ENCODE measurements at regions of chr12 and their contacts with region 1.

Region 1: GRCh38 chr12:11746024-11746771 is 96.7 kb downstream of the ETV6 start:
- DNase-seq: peak in 1 of 2 experiments; percentile 77
- ATAC-seq: peak; percentile 81 to 93
- H3K4me3 ChIP-seq: no peak overlapping the region
- H3K27ac ChIP-seq: peak overlapping the region; percentile 28 to 65; a peak in 4 of 6 replicates
- H3K4me1 ChIP-seq: peaks cover 30% of the 10 kb centered on the region; the same call in 2 of the 3 replicates
- CTCF ChIP-seq: no peak
- EP300 ChIP-seq: peak; percentile 14 to 68; a peak in 1 of 5 replicates
- POLR2A ChIP-seq: no peak
- RAD21 ChIP-seq: peak in 1 of 2 experiments; percentile 18; a peak in 1 of 5 replicates

Region 2: GRCh38 chr12:11648831-11649702 is 97.1 kb before region 1 on chr12 and contains the start of gene ETV6:
- CTCF ChIA-PET with region 1: no interaction called
- POLR2A ChIA-PET with region 1: interaction called, 14 read pairs
- DNase-seq: peak; percentile 82 to 87
- ATAC-seq: peak; percentile 87 to 88
- H3K4me3 ChIP-seq: peak within 1 kb of the TSS; percentile 95
- H3K27ac ChIP-seq: peak within 1 kb of the TSS; percentile 90 to 100
- H3K4me1 ChIP-seq: peaks cover 20% of the 10 kb centered on the region
- CTCF ChIP-seq: no peak
- EP300 ChIP-seq: no peak; a peak in 1 of 5 replicates
- POLR2A ChIP-seq: peak; percentile 47
- RAD21 ChIP-seq: peak; percentile 1 to 22; a peak in 1 of 5 replicates
- polyA plus RNA-seq, gene ETV6: 7.0 and 9.9 TPM in 2 replicates

Measured in A549 (cell line).